ENCODE measurements at regions of chr3 and their contacts with region 1.

Region 1: DNA sequence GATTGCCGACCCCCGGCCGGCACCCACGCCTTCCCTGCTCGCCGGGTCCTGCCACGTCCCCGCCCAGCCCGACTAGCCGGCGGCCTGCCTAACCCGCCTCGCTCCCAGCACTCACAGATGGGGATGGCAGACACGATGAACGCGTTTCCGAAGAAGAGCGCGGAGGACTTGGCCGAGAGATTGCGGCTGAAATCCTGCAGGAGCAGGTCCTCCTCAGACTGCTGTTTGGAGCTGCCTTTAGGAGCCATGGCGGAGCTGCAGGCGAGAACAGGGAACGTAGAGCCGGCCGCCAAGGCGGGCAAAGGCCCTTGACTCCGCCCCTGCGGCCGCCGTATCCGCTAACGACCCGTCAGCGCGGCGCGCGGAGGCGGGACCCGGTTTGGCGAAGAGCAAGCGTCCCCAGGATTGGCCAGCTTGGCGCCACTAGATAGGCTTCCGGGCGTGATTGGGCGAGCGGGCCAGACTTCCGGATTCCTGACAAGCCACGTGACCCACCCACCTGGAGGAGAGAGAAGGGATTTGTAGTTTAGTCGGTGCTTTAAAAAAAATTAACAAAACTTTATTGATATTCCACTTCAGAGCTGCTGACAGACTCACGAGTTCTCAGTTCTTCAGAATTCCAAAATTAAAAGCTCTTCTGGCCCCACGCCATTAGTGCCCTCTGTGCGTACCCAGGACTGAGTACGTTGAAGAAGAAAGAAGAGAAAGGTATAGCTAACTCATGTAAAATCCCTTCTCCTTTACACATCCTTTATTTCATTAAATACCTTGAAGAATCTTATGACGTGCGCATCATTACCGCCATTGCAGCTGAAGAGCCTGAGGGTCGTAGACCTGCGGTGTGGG is at the start of gene SSR3:
- DNase-seq: peak; percentile 99 to 100 (median 100)
- H3K4me3 ChIP-seq: peak within 1 kb of the TSS; percentile 17 to 94 (median 72)
- H3K27ac ChIP-seq: peak within 1 kb of the TSS; percentile 74 to 89 (median 80)
- H3K4me1 ChIP-seq: peaks cover 5 to 37% of the 10 kb centered on the region in 2 donors
- H3K27me3 ChIP-seq: no peaks in the 10 kb centered on the region
- CTCF ChIP-seq: peak in 5 of 6 experiments; percentile 43 to 79 (median 74)
- POLR2A ChIP-seq: peak; percentile 94
- total RNA-seq, gene SSR3: 93.6 to 479 (median 128) TPM

Region 2: DNA sequence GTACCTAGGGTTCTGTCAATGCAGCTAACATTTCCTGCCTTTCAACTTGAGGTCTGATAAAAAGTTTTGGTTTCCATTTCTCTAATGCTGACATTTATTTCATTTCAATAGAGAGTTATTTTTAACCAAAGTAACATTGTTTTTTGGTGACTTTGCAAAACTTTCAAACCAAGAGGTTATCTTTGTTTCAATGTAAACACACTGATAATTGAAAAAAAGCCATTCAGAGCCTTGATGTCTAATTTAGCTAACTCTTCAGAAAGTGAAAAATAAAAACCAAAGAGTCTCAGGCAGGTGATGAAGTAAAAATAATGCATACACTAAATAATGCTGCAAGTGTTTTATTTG is 109.7 kb after region 1 on chr3:
- intact Hi-C with region 1: loop called in 1 of 2 experiments (anchors 10 kb)
- DNase-seq: no peak
- H3K4me3 ChIP-seq: no peak overlapping the region
- H3K27ac ChIP-seq: no peak overlapping the region
- H3K4me1 ChIP-seq: peaks cover 0 to 6% of the 10 kb centered on the region in 2 donors
- H3K27me3 ChIP-seq: no peaks in the 10 kb centered on the region
- CTCF ChIP-seq: no peak
- POLR2A ChIP-seq: no peak

Region 3: DNA sequence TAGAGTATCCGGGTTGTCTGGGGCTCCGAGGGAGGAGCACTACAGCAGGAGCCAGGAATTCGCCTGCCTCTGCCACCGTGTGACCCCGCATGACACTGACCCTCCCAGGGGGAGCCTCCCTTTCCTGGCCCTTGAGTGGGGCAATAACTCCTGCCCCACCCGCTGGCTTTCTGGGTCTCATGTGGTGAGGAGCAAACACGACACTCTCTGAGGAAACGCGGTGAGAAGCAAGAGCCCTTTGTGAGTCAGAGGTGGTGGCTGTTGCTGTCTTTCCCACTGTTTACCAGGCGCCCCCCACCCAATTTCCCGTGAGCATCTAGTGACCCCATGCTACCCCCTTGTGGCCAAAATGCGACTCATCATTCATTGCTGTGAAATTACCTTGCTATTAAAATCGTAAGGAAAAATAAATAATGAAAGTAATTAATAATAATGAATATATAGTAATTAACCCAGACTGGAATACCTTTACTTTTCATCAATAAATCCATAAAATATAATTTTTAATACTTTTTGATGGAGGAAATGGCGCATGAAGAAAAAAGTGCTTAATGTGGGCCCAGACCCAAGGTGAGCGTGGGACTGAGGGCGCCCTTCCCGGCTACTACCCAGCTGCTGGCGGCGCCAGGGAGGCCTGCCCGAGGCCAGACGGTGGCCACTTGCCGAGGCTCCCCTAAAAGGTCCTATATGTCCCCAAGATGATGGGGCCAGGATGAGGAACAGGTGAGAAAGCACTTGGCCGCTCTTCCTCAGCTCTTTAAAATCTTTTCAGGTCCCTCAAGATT is 575.6 kb after region 1 on chr3:
- intact Hi-C with region 1: loop called in 1 of 2 experiments (anchors 10 kb)
- DNase-seq: peak in 2 of 7 donors; percentile 35 to 38
- H3K4me3 ChIP-seq: no peak overlapping the region
- H3K27ac ChIP-seq: peak overlapping the region in 2 of 5 donors; percentile 63 to 75
- H3K4me1 ChIP-seq: peaks cover 19 to 43% of the 10 kb centered on the region in 2 donors
- H3K27me3 ChIP-seq: no peaks in the 10 kb centered on the region
- CTCF ChIP-seq: peak; percentile 18 to 60 (median 53)
- POLR2A ChIP-seq: no peak